ENCODE measurements at regions of chr12 and their contacts with region 1.

Region 1: DNA sequence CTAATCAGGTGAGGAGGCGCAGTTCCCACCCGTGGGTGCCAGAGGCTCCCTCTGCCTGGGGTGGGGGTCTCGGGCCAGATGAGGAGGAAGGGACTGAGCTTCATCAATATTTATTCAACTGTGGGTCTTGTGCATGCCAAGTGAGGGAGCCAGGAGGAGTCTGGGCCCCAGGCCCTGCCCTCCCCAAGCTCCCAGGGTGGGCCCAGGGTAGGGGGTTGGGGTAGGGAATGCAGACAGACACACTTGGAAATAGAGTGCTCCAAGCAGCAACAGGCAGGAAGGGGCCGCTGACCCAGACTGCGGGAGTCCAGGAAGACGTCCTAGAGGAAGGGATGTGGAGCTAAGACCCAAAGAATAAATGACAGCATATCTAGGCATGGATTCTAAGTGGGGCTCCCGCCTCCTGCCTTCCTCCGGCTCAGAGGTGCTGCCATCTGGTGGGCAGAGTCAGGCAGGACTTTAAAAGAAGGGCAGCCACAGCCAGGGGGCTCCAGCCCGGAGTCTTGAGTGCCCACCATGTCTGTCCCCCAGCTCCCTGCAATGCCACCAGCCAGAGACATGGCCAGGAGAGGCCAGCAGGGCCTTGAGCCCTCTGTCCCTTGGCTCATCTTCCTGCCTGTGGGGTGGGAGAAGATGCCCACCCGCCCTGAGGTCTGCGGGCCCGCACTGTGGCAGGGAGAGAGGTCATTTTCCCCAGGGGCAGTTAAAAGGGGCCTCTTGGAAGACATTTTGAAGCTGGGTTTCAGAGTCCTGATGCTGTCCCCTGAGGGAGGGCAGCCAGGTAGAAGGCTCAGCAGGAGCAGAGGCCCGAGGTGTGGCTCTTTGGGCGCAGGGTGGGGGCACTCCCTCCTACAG is 70.1 kb downstream of the PHETA1 start:
- DNase-seq: no peak
- ATAC-seq: peak; percentile 75
- H3K4me3 ChIP-seq: no peak overlapping the region
- H3K27ac ChIP-seq: no peak overlapping the region
- H3K4me1 ChIP-seq: no peaks in the 10 kb centered on the region
- H3K27me3 ChIP-seq: peaks cover 8% of the 10 kb centered on the region
- CTCF ChIP-seq: peak; percentile 67

Region 2: DNA sequence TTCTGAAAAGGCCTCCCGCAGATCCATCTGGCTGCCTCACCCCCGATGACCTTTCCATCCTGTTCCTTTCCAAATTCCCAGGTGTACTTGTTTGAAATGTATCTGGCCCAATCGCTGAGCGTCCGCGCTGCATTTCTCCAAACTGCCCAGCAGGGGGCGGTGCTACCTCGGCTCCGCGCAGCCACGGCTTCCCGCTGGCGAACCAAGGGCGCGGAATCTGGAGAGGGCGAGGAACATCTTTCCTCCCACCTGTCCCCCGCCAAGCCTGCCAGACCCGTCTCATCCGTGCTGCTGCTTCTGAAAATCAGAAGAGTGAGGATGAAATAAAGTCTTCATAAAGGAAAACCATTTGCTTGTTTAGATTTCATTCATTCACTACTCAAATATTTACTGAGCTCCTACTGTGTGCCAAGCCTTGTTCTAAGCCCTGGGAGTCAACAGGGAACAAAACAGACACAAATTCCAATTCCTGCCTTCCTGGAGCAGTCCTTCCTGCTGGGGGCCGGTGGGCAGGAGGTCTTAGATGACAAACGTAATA is 361.6 kb before region 1 on chr12:
- intact Hi-C with region 1: loop called (anchors 10 kb)
- DNase-seq: peak; percentile 74
- ATAC-seq: peak; percentile 86
- H3K4me3 ChIP-seq: no peak overlapping the region
- H3K27ac ChIP-seq: no peak overlapping the region
- H3K4me1 ChIP-seq: no peaks in the 10 kb centered on the region
- H3K27me3 ChIP-seq: peaks cover 21% of the 10 kb centered on the region
- CTCF ChIP-seq: peak; percentile 97

Region 3: GRCh38 chr12:111377440-111377839 is 78.6 kb after region 1 on chr12:
- intact Hi-C with region 1: no loop called
- DNase-seq: no peak
- ATAC-seq: no peak
- H3K4me3 ChIP-seq: no peak overlapping the region
- H3K27ac ChIP-seq: no peak overlapping the region
- H3K4me1 ChIP-seq: no peaks in the 10 kb centered on the region
- H3K27me3 ChIP-seq: no peaks in the 10 kb centered on the region
- CTCF ChIP-seq: no peak